WTC11 (cell line): ENCODE measurements at regions of chr6 and their contacts with region 1.

Region 1: GRCh38 chr6:44630125-44631028 is 242.9 kb downstream of the CDC5L start:
- DNase-seq: peak; percentile 78
- ATAC-seq: peak; percentile 89
- H3K4me3 Mint-ChIP-seq: no peak overlapping the region
- H3K27ac Mint-ChIP-seq: no peak overlapping the region
- H3K4me1 Mint-ChIP-seq: peaks cover 41% of the 10 kb centered on the region
- H3K27me3 Mint-ChIP-seq: peaks cover 4% of the 10 kb centered on the region
- CTCF ChIP-seq: 0 out of 2 replicates have a peak, but pooled peaks have one; percentile 33

Region 2: DNA sequence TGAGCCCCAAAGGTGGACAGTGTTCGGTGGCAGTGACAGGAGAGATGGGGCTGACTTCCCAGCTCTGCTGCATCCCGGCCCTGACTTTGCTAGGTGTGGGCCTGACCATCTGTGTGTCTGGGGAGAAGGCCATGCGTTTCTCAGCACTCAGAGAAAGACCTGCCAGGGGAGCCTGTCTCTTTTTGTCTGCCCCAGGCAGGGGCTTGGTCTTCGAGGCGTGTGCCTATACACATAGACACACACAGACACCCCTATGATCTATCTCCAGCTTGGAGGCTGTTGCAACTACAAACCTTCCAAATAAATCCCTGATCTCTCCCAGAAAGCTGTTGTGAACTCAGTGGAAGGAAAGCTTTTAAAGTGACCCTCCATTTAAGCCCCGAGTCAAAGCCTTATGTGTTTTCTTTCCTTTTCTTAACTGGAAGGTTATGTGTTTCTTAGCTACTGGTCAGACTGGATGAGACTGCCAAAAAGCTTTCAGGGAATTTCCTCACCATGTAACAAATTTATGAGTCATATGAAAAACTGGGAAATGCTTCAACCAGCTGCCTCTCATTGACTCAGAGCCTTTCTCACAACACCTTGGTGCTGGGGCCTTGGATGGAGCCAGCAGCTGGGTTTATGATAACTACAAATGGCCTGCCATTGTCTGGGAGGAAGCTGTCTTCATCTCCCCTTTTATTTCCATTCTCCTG is 140.3 kb before region 1 on chr6:
- CTCF ChIA-PET with region 1: interaction called, 17 read pairs
- POLR2A ChIA-PET with region 1: no interaction called
- DNase-seq: no peak
- ATAC-seq: no peak
- H3K4me3 Mint-ChIP-seq: no peak overlapping the region
- H3K27ac Mint-ChIP-seq: no peak overlapping the region
- H3K4me1 Mint-ChIP-seq: peaks cover 26% of the 10 kb centered on the region
- H3K27me3 Mint-ChIP-seq: no peaks in the 10 kb centered on the region
- CTCF ChIP-seq: no peak

Region 3: DNA sequence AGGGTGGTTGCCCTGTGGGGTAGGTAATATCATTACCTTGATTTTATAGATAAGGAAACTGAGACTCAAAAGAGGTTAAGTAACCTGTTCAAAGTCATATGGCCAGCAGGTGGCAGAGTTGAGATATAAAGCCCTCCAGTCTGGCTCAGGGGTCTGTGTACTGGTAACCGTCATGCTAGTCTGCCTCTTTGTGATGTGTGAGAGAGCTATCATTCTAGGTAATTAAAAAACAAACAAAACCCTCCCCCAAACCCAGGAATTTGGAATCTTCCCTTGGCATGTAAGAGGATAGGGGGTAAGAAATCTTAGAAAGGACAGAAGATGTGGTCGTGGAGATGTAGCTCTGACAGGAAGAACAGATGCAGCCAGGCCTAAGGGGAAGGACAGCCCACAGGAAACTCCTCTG is 36.8 kb before region 1 on chr6:
- CTCF ChIA-PET with region 1: interaction called, 28 read pairs
- POLR2A ChIA-PET with region 1: interaction called, 5 read pairs
- DNase-seq: peak; percentile 81
- ATAC-seq: peak; percentile 93
- H3K4me3 Mint-ChIP-seq: no peak overlapping the region
- H3K27ac Mint-ChIP-seq: 0 out of 2 replicates have a peak overlapping the region, but pooled peaks have one; percentile 62
- H3K4me1 Mint-ChIP-seq: peaks cover 9% of the 10 kb centered on the region
- H3K27me3 Mint-ChIP-seq: peaks cover 6% of the 10 kb centered on the region; the same call in 1 of the 2 replicates
- CTCF ChIP-seq: peak; percentile 60

Region 4: GRCh38 chr6:44685213-44685612 is 54.8 kb after region 1 on chr6:
- CTCF ChIA-PET with region 1: no interaction called
- POLR2A ChIA-PET with region 1: no interaction called
- DNase-seq: no peak
- ATAC-seq: no peak
- H3K4me3 Mint-ChIP-seq: no peak overlapping the region
- H3K27ac Mint-ChIP-seq: 0 out of 2 replicates have a peak overlapping the region, but pooled peaks have one; percentile 17
- H3K4me1 Mint-ChIP-seq: no peaks in the 10 kb centered on the region
- H3K27me3 Mint-ChIP-seq: peaks cover 6% of the 10 kb centered on the region; the same call in 1 of the 2 replicates
- CTCF ChIP-seq: no peak

Region 5: GRCh38 chr6:44779130-44779826 is 148.9 kb after region 1 on chr6:
- CTCF ChIA-PET with region 1: interaction called, 11 read pairs
- POLR2A ChIA-PET with region 1: no interaction called
- DNase-seq: no peak
- ATAC-seq: no peak
- H3K4me3 Mint-ChIP-seq: no peak overlapping the region
- H3K27ac Mint-ChIP-seq: no peak overlapping the region
- H3K4me1 Mint-ChIP-seq: peaks cover 12% of the 10 kb centered on the region
- H3K27me3 Mint-ChIP-seq: no peaks in the 10 kb centered on the region
- CTCF ChIP-seq: no peak

Region 6: DNA sequence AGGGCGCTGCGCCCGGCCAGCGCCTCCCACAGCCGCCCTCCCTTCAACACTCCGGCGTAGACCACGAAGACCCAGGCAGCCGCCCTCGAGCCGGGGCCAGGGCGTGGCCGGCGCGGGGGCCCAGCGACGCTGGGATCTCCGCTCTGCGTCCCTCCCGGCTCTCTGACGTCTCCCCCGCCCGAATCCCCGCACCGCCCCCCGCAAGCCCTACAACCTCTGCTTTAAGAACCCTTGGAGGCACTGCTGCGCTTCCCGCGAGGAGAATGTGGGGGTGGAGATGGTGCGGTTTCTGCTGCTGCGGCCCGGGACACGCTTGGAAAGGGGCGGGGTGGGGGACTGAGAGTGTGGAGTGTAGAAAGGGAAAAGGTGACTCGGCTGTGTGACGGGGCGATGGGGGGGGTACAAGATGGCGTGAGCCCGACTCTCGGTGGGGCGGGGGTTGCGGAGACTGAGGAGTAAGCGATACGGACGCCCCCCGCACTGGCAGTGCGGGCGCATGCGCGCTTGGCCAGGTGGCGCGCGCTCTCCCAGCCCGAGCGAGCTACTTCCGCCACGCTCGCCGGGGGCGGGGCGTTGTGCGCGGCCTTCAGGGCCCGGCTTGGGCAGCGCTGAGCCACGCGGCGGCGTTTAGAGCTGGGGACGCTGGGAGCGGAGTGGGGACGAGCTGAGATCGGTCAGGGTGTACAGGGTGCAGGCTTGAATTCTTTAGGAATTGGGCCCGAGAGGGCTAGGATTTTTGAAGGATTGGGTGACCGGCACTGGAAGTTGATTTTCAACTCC is 747.4 kb after region 1 on chr6 and contains the start of gene SUPT3H:
- CTCF ChIA-PET with region 1: interaction called, 10 read pairs
- POLR2A ChIA-PET with region 1: no interaction called
- DNase-seq: peak; percentile 87
- ATAC-seq: peak; percentile 92
- H3K4me3 Mint-ChIP-seq: peak within 1 kb of the TSS; percentile 92
- H3K27ac Mint-ChIP-seq: peak within 1 kb of the TSS; percentile 98
- H3K4me1 Mint-ChIP-seq: peaks cover 17% of the 10 kb centered on the region
- H3K27me3 Mint-ChIP-seq: no peaks in the 10 kb centered on the region; the same call in 1 of the 2 replicates
- CTCF ChIP-seq: no peak
- total RNA-seq, gene SUPT3H: 15.3 to 21.9 TPM (median 19.2 TPM) in 3 replicates

Region 7: GRCh38 chr6:45922728-45923351 is 1292.5 kb after region 1 on chr6:
- CTCF ChIA-PET with region 1: interaction called, 11 read pairs
- POLR2A ChIA-PET with region 1: no interaction called
- DNase-seq: peak; percentile 75
- ATAC-seq: peak; percentile 83
- H3K4me3 Mint-ChIP-seq: no peak overlapping the region
- H3K27ac Mint-ChIP-seq: no peak overlapping the region
- H3K4me1 Mint-ChIP-seq: peaks cover 34% of the 10 kb centered on the region
- H3K27me3 Mint-ChIP-seq: peaks cover 11% of the 10 kb centered on the region; the same call in 1 of the 2 replicates
- CTCF ChIP-seq: peak; percentile 50